AG04450 (cell line): ENCODE measurements at regions of chr17 and their contacts with region 1.

Region 1: GRCh38 chr17:13337864-13338371 is 263.8 kb downstream of the HS3ST3A1 start:
- DNase-seq: peak; percentile 43
- H3K4me3 ChIP-seq: peak overlapping the region; percentile 26
- H3K27ac ChIP-seq: no peak overlapping the region
- H3K27me3 ChIP-seq: no peaks in the 10 kb centered on the region
- CTCF ChIP-seq: peak; percentile 90

Region 2: GRCh38 chr17:13134050-13134449 is 203.9 kb before region 1 on chr17:
- CTCF ChIA-PET with region 1: no interaction called
- POLR2A ChIA-PET with region 1: no interaction called
- DNase-seq: no peak
- H3K4me3 ChIP-seq: no peak overlapping the region
- H3K27ac ChIP-seq: no peak overlapping the region
- H3K27me3 ChIP-seq: no peaks in the 10 kb centered on the region
- CTCF ChIP-seq: no peak

Region 3: DNA sequence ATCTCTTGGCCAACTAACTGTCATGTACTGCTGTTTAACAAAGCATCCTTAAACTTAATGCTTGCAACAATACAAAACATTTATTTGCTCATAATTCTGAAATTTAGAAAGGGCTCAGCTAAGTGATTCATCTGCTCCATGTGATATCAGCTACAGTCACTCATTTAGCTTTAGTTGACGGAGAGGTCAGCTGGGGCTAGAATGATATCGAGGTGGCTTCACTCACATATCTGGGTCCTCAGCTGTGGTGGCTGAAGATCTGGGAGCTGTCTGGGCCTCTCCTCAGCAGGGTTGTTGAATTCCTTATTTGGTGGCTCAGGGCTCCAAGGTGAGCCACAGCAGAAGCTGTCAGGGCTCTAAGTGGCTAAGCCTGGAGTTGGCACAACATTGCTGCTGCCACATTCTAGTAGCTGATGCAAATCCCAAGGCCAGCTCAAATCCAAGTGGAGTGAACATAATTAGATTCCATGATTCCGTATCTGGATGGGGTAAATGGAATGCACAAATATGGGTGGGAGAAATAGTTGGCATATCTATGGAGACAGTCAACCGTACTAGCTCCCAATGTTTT is 201.0 kb after region 1 on chr17:
- CTCF ChIA-PET with region 1: no interaction called
- POLR2A ChIA-PET with region 1: no interaction called
- DNase-seq: no peak
- H3K4me3 ChIP-seq: no peak overlapping the region
- H3K27ac ChIP-seq: no peak overlapping the region
- H3K27me3 ChIP-seq: no peaks in the 10 kb centered on the region
- CTCF ChIP-seq: no peak

Region 4: DNA sequence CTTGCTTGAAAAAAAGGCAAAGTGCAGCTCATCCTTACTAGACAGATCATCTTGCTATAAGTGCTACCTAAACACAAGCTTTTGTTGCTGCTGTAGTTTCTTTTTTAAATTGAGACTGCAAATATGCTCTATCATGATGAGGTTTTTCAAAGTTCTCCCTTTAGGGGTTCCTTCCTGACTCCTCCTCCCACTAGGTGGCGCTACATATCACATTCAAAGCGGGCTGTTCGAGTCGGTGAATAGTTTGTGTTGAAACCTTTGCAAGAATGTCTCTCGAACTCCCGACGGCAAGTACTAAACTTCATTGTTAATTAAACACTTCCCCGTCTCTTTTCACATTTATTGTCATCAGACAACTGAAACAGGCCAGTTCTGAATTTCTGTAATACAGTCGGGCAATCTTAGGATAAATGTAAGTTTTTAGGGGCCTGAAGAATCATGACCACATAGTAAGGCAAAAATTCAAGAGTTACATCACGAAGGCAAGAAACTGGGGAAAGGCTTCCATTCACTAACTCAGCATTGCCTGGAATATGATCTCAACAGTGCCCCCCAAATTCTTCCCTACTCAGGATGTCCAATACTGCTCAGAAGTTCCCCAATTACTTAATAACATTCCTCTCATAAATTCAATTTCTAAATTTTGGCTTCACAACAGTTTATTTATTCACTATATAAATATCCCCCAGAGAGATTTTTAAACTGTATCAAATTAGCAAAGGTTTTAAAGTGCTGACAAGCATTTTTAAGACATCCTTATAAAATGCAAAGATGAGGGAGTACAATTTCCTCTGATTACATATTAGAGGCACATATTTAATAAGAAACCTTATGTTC is 257.1 kb after region 1 on chr17:
- CTCF ChIA-PET with region 1: interaction called, 56 read pairs
- POLR2A ChIA-PET with region 1: no interaction called
- DNase-seq: peak; percentile 82
- H3K4me3 ChIP-seq: peak overlapping the region; percentile 17; the same call in 1 of the 2 replicates
- H3K27ac ChIP-seq: peak overlapping the region; percentile 25
- H3K27me3 ChIP-seq: no peaks in the 10 kb centered on the region
- CTCF ChIP-seq: peak; percentile 90